Activated naive CD4-positive, alpha-beta T cell treated with anti-CD3 and anti-CD28 coated beads, Interleukin-2, amount 10 ng/mL, durations not matched to agents 7 days and 5 days (primary cell): ENCODE measurements at regions of chr3 and their contacts with region 1.

Region 1: GRCh38 chr3:114418724-114419543 is 125.1 kb downstream of the TIGIT start:
- DNase-seq: no peak
- H3K4me3 Mint-ChIP-seq: no peak overlapping the region
- H3K27ac Mint-ChIP-seq: no peak overlapping the region
- H3K4me1 Mint-ChIP-seq: peaks cover 2% of the 10 kb centered on the region
- H3K27me3 Mint-ChIP-seq: no peaks in the 10 kb centered on the region

Region 2: GRCh38 chr3:114152519-114153151 is 266.3 kb before region 1 on chr3:
- CTCF ChIA-PET with region 1: interaction called, 38 read pairs
- DNase-seq: peak; percentile 84
- H3K4me3 Mint-ChIP-seq: peak overlapping the region; percentile 25
- H3K27ac Mint-ChIP-seq: no peak overlapping the region
- H3K4me1 Mint-ChIP-seq: peaks cover 5% of the 10 kb centered on the region
- H3K27me3 Mint-ChIP-seq: peaks cover 9% of the 10 kb centered on the region

Region 3: GRCh38 chr3:114362815-114363214 is 56.1 kb before region 1 on chr3:
- CTCF ChIA-PET with region 1: interaction called, 13 read pairs
- DNase-seq: no peak
- H3K4me3 Mint-ChIP-seq: no peak overlapping the region
- H3K27ac Mint-ChIP-seq: no peak overlapping the region
- H3K4me1 Mint-ChIP-seq: no peaks in the 10 kb centered on the region
- H3K27me3 Mint-ChIP-seq: no peaks in the 10 kb centered on the region

Region 4: DNA sequence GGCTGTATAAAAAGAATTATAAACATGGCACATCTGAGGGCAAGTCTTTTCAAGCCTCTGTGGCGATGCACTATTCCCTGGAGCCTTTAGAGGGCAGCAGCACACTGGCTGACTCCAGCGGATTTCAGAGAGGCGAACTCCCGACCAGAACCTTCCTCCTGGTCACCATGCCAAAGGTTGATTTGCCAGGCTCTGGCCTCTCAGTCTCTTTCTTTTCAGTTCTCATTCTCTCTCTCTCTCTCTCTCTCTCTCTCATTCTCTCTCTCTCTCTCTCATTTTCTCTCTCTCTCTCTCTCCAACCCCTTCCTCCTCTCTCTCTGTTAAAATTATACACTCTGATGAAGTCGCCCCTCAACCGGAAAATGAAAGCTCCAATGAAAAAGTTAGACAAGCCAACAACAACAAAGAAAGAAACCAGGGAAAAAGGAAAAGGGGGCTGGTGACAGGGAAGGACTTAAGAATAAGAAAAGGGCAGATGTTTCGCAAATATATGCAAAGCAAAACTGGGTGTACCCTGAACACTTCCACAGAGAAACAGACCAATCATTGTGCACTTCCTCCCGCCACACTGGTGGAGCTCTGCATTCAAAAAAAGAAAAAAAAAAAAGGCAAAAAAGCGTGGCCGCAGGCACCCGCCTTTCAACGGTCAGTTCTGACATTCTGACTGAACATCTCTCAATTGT is 34.9 kb before region 1 on chr3:
- CTCF ChIA-PET with region 1: interaction called, 55 read pairs
- DNase-seq: peak; percentile 77
- H3K4me3 Mint-ChIP-seq: peak overlapping the region; percentile 40
- H3K27ac Mint-ChIP-seq: peak overlapping the region; percentile 77
- H3K4me1 Mint-ChIP-seq: peaks cover 11% of the 10 kb centered on the region
- H3K27me3 Mint-ChIP-seq: no peaks in the 10 kb centered on the region

Region 5: DNA sequence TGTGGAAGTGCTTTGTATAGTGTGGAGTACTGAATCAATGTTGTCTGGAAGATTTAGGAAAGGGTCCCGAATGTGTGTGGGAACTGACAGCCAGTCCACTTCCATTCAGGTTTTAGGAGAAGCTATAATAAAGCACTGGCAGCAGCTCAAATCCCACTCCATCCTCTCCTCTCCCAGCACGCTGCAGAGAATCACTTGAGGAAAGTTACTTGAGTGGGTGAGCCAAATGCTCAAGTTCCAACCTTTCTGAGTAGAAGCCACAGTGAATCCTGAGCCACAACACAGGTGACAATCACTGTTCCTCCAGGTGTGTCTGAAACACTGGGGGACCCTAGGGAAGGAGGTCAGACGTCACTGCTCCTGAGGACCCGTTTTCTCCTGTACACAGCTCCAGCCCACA is 18.6 kb before region 1 on chr3:
- CTCF ChIA-PET with region 1: interaction called, 19 read pairs
- DNase-seq: no peak
- H3K4me3 Mint-ChIP-seq: no peak overlapping the region
- H3K27ac Mint-ChIP-seq: no peak overlapping the region
- H3K4me1 Mint-ChIP-seq: no peaks in the 10 kb centered on the region
- H3K27me3 Mint-ChIP-seq: no peaks in the 10 kb centered on the region